ENCODE measurements at regions of chr3 and their contacts with region 1.

Region 1: DNA sequence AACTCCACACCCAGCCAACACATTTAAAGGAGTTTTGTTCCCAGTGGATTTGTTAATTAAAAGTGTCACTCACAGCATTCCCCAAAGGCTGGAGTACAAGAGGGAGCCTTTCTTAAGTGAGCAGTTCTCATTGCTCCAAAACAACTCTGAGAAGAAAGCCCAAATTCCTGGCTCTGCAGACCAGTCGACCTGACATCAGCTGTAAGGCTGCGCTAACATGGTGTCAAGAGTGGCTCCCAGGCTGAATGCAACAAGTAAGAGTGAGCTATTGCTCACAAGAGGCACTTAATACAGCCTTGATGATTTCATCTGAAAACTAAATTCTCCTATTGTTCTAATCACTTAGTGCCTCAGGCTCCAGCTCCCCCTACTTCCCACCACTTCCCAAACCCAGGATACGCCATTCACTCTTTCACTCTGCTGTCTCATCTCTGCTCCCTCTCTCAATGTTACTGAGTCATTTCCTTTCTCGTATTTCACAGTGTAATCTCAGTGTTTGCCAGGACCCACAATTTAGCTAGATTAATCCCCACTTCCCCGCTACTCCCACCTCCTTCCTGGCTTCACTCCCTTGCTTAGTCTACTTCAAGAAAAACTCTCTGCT is 81.8 kb downstream of the WWTR1 start:
- DNase-seq: no peak
- H3K4me3 ChIP-seq: peak overlapping the region in 1 of 4 donors; percentile 27
- H3K27ac ChIP-seq: peak overlapping the region; percentile 66 to 89 (median 78)
- H3K4me1 ChIP-seq: peaks cover 34 to 98% (median 83%) of the 10 kb centered on the region in 3 donors
- H3K27me3 ChIP-seq: no peaks in the 10 kb centered on the region
- CTCF ChIP-seq: no peak
- POLR2A ChIP-seq: no peak

Region 2: DNA sequence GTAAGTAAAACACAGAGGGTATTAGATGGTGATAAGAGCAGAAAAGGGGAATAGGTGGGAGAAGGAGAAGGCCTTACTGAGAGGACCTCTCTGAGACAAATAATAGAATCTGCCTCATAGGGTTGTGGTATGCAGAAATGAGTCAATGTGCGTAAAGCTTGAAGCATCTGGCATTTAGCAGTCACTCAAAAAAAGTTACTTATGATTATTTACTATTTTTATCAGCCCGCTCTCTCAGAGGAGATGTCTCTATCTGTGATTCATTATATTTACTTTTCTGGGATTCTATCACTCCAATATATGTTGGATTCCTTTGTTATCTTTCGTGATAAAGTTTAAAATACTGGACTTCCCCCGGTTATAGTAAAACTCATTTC is 194.0 kb before region 1 on chr3:
- intact Hi-C with region 1: no loop called
- DNase-seq: no peak
- H3K4me3 ChIP-seq: no peak overlapping the region
- H3K27ac ChIP-seq: peak overlapping the region in 3 of 4 donors; percentile 38 to 94 (median 57)
- H3K4me1 ChIP-seq: peaks cover 30 to 79% (median 31%) of the 10 kb centered on the region in 3 donors
- H3K27me3 ChIP-seq: no peaks in the 10 kb centered on the region
- CTCF ChIP-seq: no peak
- POLR2A ChIP-seq: no peak

Region 3: DNA sequence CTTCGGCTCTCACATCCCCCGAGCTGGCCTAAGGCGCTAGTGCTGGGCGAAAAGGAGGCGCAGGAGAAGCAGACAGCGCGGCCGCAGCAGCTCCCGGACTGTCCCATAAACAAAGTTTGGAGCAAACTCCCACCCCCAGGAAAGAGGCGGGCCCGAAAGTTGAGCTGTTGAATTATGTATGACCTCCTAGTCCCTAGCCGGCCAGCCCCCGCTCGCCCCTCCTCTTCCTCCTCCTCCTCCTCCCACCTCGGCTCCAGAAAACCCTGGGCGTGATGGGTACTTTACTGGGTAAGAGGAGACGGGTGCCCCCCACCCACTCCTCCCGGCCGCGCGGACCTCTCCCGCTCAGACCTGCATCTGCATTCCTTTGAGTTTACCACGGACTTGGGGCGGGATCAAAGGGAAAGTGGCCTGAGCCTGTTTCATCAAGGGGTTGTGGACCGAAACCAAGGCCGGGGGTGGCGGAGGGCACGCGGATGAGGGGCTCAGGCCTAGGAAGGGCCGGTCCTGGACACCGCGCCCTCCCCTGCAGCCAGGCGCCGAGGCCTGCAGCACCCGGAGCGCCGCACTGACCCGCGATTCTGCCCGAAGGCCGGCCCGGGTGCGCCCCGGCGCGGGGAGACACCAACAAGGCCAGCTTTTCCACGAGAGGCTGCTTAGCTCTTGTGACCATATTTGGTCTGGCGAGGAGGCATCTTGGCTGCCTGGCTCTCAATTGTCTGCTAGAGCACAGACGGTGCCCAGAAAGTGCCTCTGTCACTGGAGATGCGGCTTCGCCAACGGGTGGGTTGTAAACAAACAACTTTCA is 82.1 kb after region 1 on chr3 and contains the start of gene WWTR1:
- intact Hi-C with region 1: loop called (anchors 10 kb)
- DNase-seq: peak; percentile 51
- H3K4me3 ChIP-seq: peak within 1 kb of the TSS; percentile 61 to 76 (median 76)
- H3K27ac ChIP-seq: peak within 1 kb of the TSS; percentile 95 to 98 (median 97)
- H3K4me1 ChIP-seq: peaks cover 15 to 68% (median 31%) of the 10 kb centered on the region in 3 donors
- H3K27me3 ChIP-seq: no peaks in the 10 kb centered on the region
- CTCF ChIP-seq: peak in 1 of 6 experiments; percentile 9
- POLR2A ChIP-seq: peak in 3 of 4 donors; percentile 48 to 95 (median 92)
- total RNA-seq, gene WWTR1: 35.7 to 116 (median 39.6) TPM

Measured in esophagus squamous epithelium (tissue), 5 donors.